Posterior cingulate gyrus (tissue), 11 donors: ENCODE measurements at regions of chr7 and their contacts with region 1.

Region 1: DNA sequence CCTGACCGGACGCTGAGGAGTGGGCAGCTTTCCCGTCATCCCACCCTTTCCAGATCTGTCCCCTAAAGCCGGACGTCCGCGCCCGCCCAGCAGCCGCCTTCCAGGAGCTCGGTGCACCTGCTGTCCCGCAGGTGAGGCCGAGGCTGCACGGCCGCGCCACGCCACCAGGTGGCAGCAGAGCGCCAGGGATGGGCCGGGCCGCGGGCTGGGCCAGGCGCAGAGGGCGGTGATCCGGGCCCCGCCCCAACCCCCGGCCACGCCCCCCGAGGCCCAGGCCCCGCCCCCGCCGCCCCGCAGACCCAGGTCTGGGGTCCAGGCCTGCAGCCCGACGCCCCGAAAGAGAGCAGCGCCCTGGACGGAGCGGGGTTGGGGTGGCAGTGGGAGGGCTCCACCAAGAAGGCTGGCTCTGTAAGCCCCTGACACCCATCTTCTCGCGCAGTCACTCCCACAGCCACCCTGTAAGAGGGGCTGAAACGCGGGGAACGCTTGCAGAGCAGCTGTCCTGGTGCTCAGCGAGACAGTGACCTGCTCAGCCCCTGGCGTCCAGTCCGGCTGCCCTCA is 32.2 kb downstream of the FOXL3 start:
- DNase-seq: peak in 9 of 10 donors; percentile 47 to 97 (median 78)

Region 2: DNA sequence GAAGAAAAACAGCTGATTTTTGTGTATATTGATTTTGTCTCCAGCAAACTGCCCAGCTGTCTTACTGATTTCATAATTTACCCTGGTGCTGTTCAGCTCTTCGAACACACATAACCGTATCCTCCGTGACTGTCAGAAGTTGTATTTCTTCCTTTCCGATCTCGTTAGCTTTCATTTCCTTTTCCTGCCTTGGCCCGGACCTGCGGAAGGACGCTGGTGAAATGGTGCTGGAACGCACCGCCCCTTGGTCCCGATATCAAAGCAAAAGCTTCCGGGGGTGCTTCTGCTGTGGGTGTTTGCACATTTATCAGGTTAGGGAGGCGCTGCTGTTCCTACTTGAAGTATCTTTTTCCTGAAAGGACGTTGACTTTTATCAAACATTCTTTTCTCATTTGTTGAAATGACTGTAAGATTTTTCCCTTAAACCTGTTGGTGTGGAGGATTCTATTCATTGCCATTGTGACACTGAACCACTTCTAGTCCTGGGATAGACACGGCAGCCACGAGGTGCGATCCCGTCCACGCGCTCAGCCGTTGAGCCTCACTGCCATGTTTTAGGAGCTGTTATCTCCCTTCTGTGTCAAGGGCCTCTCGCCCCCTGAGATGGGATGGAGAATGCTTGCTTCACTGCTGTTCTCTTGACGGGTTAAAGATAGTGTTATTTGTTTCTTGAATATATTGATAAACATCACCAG is 40.4 kb after region 1 on chr7:
- intact Hi-C with region 1: no loop called
- DNase-seq: peak in 4 of 10 donors; percentile 12 to 74 (median 42)

Region 3: GRCh38 chr7:636396-636795 is 314.2 kb after region 1 on chr7:
- intact Hi-C with region 1: loop called (anchors 2 kb)
- DNase-seq: peak in 7 of 10 donors; percentile 41 to 93 (median 65)

Region 4: DNA sequence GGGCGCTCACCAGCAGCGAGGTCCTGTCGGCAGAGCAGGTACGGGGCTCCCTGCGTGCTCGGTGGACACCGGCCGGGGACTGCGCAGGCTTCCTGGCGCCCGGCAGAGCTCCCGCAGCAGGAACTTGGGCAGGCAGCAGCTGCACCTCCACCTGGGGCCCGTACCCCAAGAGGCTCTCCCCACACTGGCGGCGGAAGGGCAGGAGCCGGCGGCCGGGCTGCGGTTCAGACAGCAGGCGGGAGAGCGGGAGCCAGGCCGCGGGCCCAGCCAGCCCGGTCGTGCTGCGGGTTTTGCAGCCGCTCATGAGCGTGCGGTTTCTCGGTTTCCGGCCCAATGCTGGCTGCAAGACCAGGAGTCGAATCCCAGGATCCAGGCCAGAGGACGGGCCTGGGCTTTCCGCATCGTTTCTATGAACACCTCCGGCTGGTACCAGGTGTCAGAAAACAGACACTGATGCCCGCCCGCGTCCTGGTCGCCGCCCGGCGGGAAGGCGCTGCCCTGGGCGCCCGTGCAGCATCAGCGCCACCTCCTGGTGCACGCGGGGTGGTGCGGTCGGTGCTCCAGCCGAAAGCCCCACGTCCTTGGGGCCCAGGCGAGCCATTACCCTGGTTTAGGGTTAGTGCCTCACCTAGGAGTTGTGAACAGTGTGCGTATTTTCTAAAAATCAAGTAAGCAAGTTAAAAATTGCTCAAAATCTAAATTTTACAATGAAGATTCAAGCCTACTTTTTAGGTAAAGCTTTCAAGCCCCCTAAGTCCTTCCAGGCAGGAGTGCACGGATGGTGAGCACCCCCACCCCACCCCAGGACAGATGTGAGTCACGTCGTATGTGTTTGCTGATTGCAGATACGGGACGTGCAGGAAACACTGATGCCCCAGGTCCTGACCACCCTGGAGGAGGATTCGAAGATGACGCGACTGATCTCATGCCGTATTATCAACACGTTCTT is 452.2 kb after region 1 on chr7:
- intact Hi-C with region 1: loop called (anchors 1 kb)
- DNase-seq: peak; percentile 51 to 94 (median 69)

Region 5: GRCh38 chr7:867672-868486 is 545.7 kb after region 1 on chr7:
- intact Hi-C with region 1: loop called (anchors 10 kb)
- DNase-seq: peak in 4 of 10 donors; percentile 67 to 92 (median 84)